Cardiac septum (tissue), 1 donor: ENCODE measurements at regions of chr11 and their contacts with region 1.

Region 1: DNA sequence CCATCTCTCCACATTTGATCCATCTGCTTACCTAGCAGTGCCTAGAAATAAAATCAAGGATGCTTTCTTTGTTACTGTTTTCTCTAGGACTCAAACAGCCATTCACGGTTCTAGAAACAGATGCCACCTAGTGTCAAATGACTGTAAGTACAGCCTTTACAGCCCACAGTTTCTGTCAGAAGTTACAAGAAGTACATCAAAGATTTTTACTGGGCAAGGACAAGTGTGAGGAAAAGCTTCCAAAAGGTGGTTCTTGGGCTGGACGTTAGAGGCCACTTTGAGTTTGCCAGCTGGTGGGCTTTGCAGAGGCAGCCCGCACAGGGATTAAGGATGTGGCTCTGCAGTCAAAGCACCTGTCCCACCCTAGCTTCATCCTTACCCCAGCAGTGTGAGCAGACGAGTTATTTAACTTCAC is 6.9 kb downstream of the KMT5B start:
- DNase-seq: no peak

Region 2: DNA sequence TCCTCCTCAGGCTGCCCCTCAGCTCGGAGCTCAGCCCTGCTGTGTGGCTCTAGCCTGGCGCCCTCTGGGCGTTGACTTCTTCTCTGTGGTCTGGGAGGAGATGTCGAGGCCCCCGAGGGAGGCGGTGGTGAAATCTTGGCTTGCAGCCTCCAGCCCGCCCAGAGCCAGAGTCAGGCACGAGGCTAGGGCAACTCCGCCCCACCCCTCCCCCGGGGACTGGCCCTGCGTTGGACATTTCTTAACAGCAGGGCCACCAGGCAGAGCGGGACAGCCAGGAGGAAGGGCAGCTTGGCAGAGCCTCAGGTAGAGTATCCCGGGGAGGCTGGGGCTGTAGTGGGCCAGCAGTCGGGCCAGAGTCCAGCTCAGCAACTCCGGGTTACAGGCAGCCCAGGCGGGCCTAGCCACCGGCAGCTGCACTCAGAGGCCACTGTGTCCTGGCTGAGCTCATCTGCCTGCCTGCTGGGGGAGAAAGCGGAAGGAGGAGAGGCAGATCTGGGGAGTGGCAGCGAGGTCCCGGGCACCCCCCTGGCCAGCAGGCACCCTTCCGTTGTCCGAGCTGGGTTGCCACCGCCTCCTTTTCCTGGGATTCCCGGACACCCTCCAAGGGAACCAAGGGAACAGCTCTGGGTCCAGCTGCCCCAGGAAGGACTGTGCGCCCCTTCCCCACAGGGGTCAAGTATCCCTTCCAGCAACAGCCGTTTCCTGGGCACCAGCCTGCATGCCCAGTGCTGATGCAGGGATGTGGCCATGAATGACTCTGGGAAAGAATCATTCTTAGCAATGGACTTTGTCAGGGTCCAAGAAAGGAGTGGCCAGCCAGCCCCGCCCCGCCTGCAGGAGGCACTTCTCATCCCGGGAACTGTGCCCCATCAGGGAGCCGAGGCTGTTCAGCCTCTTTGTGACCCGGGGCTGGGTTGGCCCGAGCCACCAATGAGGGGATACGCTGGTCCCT is 195.8 kb before region 1 on chr11 and contains the start of gene ALDH3B1:
- intact Hi-C with region 1: loop called (anchors 10 kb)
- DNase-seq: peak; percentile 93
- total RNA-seq, gene ALDH3B1: 5.1 TPM